ENCODE measurements at regions of chr2 and their contacts with region 1.

Region 1: DNA sequence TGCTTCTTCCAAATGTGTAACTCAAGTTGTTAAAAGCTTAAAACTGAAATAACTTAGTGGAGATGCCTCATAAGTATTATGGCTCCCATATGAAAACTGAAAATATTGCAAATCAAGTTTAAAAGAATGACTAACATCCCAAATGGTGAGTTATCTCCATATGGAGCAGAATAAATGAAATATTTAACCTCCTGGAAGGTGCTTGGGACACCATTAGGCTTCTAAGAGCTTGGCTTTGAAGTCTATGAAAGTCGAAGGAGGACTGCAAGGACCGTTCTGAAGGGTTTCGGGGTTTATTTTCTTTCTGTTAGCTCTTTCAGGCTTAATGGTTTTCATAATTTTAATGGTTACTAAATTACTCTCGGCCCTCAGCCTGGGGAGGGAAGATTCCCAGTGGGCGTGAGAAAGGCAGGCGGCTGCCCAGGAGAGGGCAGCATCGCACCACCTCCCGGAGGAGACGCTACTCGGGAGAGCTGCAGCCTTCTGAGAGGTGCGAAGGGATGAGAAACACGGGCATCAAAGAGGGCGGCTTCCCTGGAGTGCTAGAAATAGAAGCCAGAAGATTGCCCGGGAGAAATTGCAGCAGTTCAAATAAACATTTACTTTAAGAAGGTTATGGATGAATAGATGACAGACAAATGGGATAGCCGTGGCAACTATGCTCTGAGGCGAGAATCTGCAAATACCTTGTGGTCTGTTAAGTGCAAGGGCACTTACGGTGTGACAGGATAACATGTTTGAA is 43.1 kb downstream of the MAP3K19 start:
- DNase-seq: peak; percentile 48
- ATAC-seq: peak; percentile 100
- H3K4me3 ChIP-seq: no peak overlapping the region
- H3K27ac ChIP-seq: no peak overlapping the region
- H3K4me1 ChIP-seq: no peaks in the 10 kb centered on the region
- H3K27me3 ChIP-seq: peaks cover 4% of the 10 kb centered on the region; the same call in 1 of the 2 replicates
- CTCF ChIP-seq: peak; percentile 83 to 97 (median 96)
- POLR2A ChIP-seq: no peak
- RAD21 ChIP-seq: peak; percentile 97

Region 2: DNA sequence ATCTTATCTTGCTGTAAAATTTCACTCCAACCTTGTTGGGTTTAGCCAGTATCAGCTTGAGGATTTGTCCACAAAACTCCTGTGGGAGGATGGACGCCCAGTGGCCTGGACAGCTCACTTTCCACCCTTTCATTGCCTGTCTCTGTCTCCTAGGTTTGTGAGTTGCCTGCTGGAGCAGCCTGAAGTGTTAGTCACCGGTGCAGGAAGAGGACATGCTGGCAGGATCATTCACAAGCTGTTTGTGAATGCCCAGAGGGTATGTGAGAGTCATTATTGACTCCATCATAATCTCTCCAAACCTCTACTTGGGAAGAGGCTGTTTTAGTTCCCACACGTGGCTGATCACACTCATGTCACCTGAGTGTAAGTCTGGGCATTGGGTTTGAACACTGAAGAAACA is 160.3 kb after region 1 on chr2:
- CTCF ChIA-PET with region 1: no interaction called
- POLR2A ChIA-PET with region 1: no interaction called
- RAD21 ChIA-PET with region 1: no interaction called
- intact Hi-C with region 1: loop called (anchors 10 kb)
- DNase-seq: no peak
- ATAC-seq: no peak
- H3K4me3 ChIP-seq: no peak overlapping the region
- H3K27ac ChIP-seq: no peak overlapping the region
- H3K4me1 ChIP-seq: no peaks in the 10 kb centered on the region
- H3K27me3 ChIP-seq: no peaks in the 10 kb centered on the region
- CTCF ChIP-seq: no peak
- POLR2A ChIP-seq: no peak
- RAD21 ChIP-seq: no peak

Region 3: DNA sequence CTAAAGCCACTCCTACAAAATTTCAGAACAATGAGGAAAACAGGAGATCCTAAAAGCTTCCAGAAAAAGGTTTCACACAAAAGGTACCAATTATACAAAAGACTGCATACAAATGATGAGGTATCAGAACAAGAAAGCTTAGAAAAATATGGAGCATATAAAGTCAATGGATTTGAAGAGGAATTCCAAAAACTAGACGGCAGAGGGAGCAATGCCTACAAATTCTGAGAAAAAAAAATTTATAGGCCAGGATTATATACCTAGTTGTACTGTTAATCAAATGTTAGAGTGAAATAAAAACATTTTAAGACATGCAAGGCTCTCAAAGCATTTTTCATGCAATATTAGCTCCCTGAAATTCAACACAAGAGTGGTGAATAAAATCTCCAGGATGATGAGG is 420.7 kb after region 1 on chr2:
- CTCF ChIA-PET with region 1: no interaction called
- POLR2A ChIA-PET with region 1: no interaction called
- RAD21 ChIA-PET with region 1: no interaction called
- intact Hi-C with region 1: loop called (anchors 10 kb)
- DNase-seq: peak; percentile 4
- ATAC-seq: no peak
- H3K4me3 ChIP-seq: no peak overlapping the region
- H3K27ac ChIP-seq: no peak overlapping the region
- H3K4me1 ChIP-seq: no peaks in the 10 kb centered on the region
- H3K27me3 ChIP-seq: no peaks in the 10 kb centered on the region
- CTCF ChIP-seq: peak; percentile 13 to 44 (median 22); a peak in 3 of 6 replicates
- POLR2A ChIP-seq: no peak
- RAD21 ChIP-seq: peak; percentile 17; the same call in 1 of the 2 replicates

Region 4: GRCh38 chr2:135585586-135585985 is 581.4 kb after region 1 on chr2:
- CTCF ChIA-PET with region 1: interaction called, 5 read pairs
- POLR2A ChIA-PET with region 1: interaction called, 3 read pairs
- RAD21 ChIA-PET with region 1: no interaction called
- intact Hi-C with region 1: loop called (anchors 5 kb)
- DNase-seq: no peak
- ATAC-seq: no peak
- H3K4me3 ChIP-seq: no peak overlapping the region
- H3K27ac ChIP-seq: no peak overlapping the region
- H3K4me1 ChIP-seq: no peaks in the 10 kb centered on the region
- H3K27me3 ChIP-seq: no peaks in the 10 kb centered on the region
- CTCF ChIP-seq: peak in 1 of 3 experiments; percentile 28; a peak in 1 of 6 replicates
- POLR2A ChIP-seq: no peak
- RAD21 ChIP-seq: no peak; the same call in 1 of the 2 replicates

Region 5: DNA sequence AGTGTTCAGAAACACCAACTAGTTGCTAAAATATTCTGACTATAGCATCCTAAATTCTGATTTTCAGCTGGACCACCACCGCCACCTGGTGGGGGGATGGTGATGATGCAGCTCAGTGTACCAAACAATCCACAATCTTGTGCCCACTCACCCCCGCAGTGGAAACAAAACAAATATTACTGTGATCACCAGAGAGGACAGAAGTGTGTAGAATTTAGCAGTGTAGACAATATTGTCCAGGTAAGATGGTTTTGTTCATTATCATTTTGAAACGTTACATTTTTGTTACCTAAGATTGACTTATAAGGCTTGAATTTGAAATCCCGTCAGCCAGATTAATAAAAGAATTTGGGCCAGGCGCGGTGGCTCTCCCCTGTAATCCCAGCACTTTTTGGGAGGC is 705.8 kb after region 1 on chr2:
- CTCF ChIA-PET with region 1: interaction called, 45 read pairs
- POLR2A ChIA-PET with region 1: no interaction called
- RAD21 ChIA-PET with region 1: interaction called in 1 of 2 experiments, 12 read pairs
- intact Hi-C with region 1: loop called (anchors 1 kb)
- DNase-seq: peak; percentile 8
- ATAC-seq: peak; percentile 72
- H3K4me3 ChIP-seq: no peak overlapping the region
- H3K27ac ChIP-seq: no peak overlapping the region
- H3K4me1 ChIP-seq: no peaks in the 10 kb centered on the region
- H3K27me3 ChIP-seq: no peaks in the 10 kb centered on the region
- CTCF ChIP-seq: peak; percentile 79 to 97 (median 92)
- POLR2A ChIP-seq: no peak
- RAD21 ChIP-seq: peak; percentile 86

Region 6: GRCh38 chr2:136384531-136385303 is 1380.5 kb after region 1 on chr2:
- CTCF ChIA-PET with region 1: interaction called, 3 read pairs
- POLR2A ChIA-PET with region 1: no interaction called
- RAD21 ChIA-PET with region 1: no interaction called
- intact Hi-C with region 1: loop called (anchors 5 kb)
- DNase-seq: peak; percentile 39
- ATAC-seq: peak; percentile 99
- H3K4me3 ChIP-seq: no peak overlapping the region
- H3K27ac ChIP-seq: no peak overlapping the region
- H3K4me1 ChIP-seq: no peaks in the 10 kb centered on the region
- H3K27me3 ChIP-seq: peaks cover 16% of the 10 kb centered on the region; the same call in 1 of the 2 replicates
- CTCF ChIP-seq: peak; percentile 68 to 76 (median 69)
- POLR2A ChIP-seq: no peak
- RAD21 ChIP-seq: peak; percentile 89